AG04449 (cell line): ENCODE measurements at regions of chr6 and their contacts with region 1.

Region 1: DNA sequence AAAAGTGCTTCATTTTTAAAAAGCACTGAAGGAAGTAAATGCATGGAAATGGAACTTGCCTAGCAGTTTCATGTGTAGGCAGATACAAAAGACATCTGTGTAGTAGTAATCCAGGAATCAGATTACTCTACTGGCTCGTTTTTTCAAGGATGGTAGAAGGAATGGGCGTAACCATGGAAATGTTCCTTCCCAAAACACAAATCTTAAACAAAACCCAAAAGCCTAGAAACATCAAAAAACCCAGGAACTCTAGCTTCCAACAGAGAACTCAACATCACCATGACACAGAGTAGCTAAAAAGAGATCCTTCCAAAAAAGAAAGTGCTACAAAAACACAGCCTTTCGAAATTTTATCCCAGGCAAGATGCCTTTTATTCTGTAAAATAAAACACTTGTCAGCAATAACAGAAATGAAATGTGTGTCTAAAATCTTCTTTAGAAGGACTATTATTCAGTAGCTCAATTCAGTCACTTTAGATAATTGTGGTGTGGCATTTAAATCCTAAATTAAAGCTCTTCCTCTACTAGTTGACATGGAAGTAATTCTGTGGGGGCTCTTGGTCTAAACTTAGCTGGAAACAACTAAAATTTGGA is 81.7 kb downstream of the FAM217A start:
- DNase-seq: no peak
- H3K4me3 ChIP-seq: no peak overlapping the region
- CTCF ChIP-seq: no peak

Region 2: DNA sequence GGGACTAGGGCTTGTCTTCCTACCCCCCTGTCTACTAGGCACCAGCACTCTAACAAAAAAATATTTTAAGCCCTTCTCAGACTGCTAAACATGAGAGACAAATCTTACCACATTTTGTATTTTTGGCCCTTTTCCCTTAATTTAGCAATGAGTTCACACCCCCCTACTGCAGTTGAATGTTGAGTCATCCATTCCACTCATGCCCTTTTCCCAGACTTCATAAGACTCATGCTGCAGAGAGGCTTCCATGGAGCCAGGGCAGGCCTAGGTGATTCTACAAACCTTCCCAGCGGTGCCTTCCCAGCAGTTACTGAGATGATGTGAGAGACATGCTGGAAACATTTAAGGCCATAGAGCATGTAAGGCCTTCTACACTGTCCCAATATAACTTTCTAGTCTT is 299.7 kb before region 1 on chr6:
- CTCF ChIA-PET with region 1: no interaction called
- POLR2A ChIA-PET with region 1: no interaction called
- DNase-seq: peak; percentile 88
- H3K4me3 ChIP-seq: no peak overlapping the region
- CTCF ChIP-seq: no peak

Region 3: GRCh38 chr6:4008324-4009047 is 11.2 kb after region 1 on chr6:
- CTCF ChIA-PET with region 1: interaction called, 38 read pairs
- POLR2A ChIA-PET with region 1: no interaction called
- DNase-seq: peak; percentile 76
- H3K4me3 ChIP-seq: no peak overlapping the region
- CTCF ChIP-seq: peak; percentile 44